Endothelial cell of umbilical vein (primary cell): ENCODE measurements at regions of chr11 and their contacts with region 1.

Region 1: DNA sequence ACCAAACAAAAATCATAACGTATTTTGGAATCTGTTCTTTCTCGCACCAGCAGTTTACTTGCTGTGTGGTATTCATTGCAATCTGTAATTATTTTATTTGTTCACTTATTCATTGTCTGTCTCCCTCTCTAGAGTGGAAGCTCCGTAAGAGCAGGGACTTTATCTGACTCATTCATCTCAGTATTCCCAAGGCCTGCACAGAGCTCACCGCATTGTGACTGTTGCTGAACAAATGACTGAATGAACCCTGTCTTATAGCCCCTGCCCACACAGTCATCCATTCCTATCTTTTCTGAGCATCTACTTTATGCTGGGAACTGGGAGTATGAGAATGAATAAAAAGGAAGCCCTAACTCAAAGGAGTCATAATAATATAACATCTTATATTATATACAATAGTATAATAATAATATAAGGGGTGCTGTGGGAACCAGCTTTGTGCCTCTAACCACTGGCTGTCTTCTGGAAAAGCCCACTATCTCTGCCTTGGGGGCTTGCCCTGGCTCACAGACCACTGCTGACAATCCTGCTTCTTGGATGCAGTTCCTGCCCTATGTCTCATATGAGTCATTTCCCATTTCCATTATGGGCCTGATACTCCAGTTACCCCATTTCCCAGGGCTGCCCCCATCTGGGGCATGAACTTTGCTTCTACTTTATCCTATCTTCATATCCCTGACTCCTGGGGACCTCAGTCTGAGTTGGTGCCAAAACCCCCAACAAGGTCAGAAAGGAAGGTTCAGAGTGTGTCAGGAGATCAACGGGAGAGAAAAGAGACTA is 11.0 kb downstream of the XRRA1 start:
- DNase-seq: peak; percentile 71
- H3K4me3 ChIP-seq: no peak overlapping the region
- H3K27ac ChIP-seq: peak overlapping the region; percentile 70
- H3K4me1 ChIP-seq: peaks cover 24% of the 10 kb centered on the region
- H3K27me3 ChIP-seq: no peaks in the 10 kb centered on the region
- CTCF ChIP-seq: no peak
- POLR2A ChIP-seq: no peak

Region 2: GRCh38 chr11:74956397-74957015 is 18.6 kb after region 1 on chr11:
- CTCF ChIA-PET with region 1: interaction called, 11 read pairs
- POLR2A ChIA-PET with region 1: no interaction called
- dilution Hi-C with region 1: no loop called
- intact Hi-C with region 1: no loop called
- DNase-seq: no peak
- H3K4me3 ChIP-seq: no peak overlapping the region
- H3K27ac ChIP-seq: no peak overlapping the region
- H3K4me1 ChIP-seq: peaks cover 11% of the 10 kb centered on the region
- H3K27me3 ChIP-seq: no peaks in the 10 kb centered on the region
- CTCF ChIP-seq: no peak
- POLR2A ChIP-seq: no peak

Region 3: DNA sequence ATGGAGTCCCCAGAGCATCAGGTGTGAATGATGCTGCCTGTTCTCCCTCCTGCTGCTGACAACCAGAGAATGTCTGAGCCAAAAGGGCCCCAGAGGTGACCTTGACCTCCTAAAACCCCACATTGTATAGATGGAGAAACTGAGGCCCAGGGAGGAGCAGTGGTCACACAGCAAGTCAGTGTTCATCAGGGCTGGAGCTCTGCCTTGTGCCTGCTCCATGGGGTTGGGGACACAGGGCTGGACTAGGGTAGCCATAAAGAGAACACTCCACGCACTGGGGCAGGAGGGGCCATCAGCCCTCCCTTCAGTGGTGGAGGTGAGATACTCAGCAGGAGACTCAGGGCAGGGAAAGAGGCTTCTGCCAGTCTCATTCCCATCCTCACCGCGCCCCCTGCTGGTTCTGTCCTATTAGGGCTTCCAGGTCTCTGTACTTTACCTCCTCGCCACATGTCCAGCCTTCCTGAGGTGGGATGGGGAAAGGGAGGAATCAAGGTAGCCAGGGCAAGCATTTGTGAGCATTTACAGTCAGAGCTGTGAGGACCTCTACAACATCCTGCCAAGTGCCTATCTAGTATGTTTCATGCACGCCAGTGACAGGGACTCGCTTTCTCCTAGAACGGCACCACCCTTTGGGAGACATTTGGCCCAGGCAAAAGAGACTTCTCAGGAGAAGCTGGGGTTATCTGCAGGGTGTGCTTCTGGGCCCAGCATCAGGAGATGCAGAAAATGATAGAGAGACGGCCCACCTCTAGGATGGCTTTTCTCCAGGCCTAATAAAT is 94.1 kb after region 1 on chr11:
- CTCF ChIA-PET with region 1: interaction called, 83 read pairs
- POLR2A ChIA-PET with region 1: no interaction called
- dilution Hi-C with region 1: no loop called
- intact Hi-C with region 1: no loop called
- DNase-seq: peak; percentile 70
- H3K4me3 ChIP-seq: no peak overlapping the region
- H3K27ac ChIP-seq: no peak overlapping the region
- H3K4me1 ChIP-seq: peaks cover 8% of the 10 kb centered on the region
- H3K27me3 ChIP-seq: peaks cover 0 to 7% of the 10 kb centered on the region in 2 experiments
- CTCF ChIP-seq: peak; percentile 85
- POLR2A ChIP-seq: no peak